Posterior cingulate gyrus (tissue), 11 donors: ENCODE measurements at regions of chr1 and their contacts with region 1.

Region 1: DNA sequence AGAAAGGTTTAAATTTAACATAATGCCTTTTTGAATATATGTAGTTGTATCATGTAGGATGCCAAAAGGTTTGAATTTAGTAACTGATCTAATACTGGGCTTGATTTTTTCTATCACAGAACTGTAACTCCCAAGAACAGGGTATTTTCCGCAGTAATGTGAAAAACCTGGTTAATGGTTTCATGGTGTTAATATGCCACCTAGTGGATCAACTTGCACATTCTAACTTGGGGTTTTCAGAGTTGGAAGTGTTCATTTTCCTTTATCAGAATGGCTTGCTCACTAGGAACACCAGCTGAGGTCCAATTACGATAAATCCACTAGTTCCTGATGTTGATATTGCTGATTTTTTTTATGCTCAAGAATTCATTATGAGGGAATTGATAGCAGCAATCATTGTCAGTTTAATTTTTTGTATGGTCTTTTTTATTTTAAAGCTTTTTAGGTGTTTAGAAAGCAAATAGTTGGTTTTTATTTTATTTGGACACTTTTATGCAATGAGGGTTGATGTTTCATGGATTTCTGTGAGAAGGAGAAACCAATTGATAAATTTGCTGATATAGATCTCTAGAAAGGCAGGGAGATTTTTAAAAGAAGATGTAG is 157.2 kb downstream of the PLA2G4A start:
- DNase-seq: no peak

Region 2: DNA sequence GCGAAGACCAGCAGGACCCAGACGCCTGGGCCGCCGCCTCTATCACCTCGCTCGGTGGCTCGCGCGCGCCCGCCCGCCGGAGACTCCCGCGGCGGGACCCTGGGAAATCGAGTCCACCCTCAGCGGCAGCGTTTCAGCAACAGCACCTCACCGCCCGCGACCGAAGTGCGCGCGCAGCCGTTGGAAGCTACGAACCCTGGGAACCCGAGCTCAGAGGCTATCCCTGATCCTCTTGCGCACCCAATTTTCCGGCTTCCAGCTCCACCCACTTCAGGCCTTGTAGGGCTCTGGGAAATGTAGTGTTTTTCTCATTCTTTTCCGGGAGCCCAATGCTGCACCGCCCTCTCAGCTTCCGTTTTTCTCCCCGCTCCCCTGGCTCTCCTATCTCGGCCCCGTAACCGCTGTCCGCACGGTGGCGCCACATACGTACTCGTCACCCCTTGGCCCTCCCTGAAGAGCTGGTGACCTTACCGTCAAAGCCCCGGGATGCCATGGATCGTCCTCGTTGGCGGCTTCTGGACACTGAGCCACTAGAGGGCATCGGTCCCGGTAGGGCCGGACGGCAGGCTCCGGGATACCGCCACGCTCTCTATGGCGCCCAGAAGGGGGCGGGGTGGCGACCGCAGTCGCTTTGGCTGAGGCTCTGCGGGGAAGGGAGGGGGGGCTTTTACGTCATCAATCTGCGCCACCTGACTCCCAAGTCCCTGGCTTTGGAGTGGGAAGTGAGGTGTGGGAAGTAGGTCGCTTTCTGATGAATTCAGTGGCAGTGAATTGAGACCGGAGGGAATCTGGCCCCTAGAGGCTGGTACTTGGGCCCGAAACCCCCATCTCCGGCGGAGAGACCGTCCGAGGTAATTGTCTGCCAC is 610.7 kb before region 1 on chr1 and contains the starts of genes ODR4 and TPR:
- intact Hi-C with region 1: loop called (anchors 10 kb)
- DNase-seq: peak; percentile 93 to 99 (median 96)

Region 3: DNA sequence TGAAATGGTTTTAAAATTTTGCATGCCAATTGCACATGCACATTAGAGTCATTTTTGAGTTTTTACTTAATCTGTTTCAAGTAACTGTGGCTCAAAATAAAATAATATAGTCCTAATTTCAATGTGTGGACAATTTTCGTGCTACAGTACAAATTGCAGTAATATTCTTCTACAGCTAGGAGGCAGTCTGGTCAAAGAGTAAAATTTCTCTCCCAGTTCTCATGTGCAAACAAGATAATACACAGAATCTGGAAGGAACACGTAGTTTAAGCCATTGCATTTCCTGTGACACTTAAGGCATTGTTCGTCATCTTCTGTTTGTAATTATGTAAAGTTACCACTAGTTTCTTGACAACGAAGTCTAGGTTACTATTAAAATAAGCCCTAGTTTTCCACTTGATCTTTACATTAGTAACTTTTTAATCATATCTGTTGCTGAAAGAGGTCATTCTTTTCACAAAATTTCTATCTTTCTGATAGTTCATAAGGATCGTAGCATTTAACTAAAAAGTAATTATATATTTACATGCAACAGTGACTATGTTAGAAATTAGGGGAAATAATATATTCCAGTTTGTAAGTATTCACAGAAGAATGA is 581.4 kb before region 1 on chr1:
- intact Hi-C with region 1: loop called (anchors 2 kb)
- DNase-seq: no peak

Region 4: GRCh38 chr1:186482661-186483255 is 503.2 kb before region 1 on chr1:
- intact Hi-C with region 1: loop called (anchors 1 kb)
- DNase-seq: peak in 7 of 10 donors; percentile 29 to 86 (median 47)

Region 5: DNA sequence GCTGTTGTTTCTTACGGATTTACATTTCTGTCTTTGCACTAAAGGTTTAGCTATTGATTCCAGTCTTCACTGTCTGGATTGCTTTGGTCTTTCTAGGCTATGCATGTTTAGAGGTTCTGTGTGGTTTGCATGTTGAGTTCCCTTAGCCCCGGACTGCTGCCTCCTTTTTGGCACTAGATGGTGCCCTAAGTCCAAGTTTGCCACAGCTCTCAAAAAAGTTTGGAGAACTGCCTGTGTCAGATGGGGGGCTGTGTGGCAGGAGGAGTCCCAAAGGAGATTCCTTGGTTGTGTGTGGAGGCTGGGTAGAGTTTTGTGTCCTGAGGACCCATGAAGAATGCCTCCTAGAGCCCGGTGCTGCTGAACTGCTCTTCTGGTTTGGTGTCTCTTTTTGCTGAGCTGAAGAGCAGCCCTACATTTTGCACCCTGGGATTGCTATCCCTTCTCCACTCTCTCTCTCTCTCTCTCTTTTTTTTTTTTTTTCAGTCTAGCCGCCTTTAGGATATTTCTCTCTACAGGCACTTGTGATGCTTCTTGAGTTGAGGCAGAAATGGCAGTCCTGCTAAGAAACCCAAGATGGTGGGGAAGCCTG is 380.1 kb before region 1 on chr1:
- intact Hi-C with region 1: loop called (anchors 1 kb)
- DNase-seq: no peak

Region 6: DNA sequence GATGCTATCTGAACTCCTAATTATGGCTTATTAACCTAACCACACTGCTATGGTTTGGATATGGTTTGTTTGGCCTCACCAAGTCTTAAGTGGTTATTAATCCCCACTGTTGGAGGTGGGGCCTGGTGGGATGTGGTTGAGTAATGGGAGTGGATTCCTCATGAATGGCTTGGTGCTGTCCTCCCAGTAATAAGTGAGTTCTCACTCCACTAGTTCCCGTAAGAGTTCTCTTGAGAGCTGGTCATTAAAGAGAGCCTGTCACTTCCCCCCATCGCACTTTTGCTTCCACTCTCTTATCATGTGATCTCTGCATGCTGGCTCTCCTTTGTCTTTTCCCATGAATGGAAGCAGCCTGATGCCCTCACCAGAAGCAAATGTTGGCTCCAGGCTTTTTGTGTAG is 171.6 kb after region 1 on chr1:
- intact Hi-C with region 1: no loop called
- DNase-seq: no peak